Common myeloid progenitor, CD34-positive (primary cell): ENCODE measurements at regions of chr1 and their contacts with region 1.

Region 1: DNA sequence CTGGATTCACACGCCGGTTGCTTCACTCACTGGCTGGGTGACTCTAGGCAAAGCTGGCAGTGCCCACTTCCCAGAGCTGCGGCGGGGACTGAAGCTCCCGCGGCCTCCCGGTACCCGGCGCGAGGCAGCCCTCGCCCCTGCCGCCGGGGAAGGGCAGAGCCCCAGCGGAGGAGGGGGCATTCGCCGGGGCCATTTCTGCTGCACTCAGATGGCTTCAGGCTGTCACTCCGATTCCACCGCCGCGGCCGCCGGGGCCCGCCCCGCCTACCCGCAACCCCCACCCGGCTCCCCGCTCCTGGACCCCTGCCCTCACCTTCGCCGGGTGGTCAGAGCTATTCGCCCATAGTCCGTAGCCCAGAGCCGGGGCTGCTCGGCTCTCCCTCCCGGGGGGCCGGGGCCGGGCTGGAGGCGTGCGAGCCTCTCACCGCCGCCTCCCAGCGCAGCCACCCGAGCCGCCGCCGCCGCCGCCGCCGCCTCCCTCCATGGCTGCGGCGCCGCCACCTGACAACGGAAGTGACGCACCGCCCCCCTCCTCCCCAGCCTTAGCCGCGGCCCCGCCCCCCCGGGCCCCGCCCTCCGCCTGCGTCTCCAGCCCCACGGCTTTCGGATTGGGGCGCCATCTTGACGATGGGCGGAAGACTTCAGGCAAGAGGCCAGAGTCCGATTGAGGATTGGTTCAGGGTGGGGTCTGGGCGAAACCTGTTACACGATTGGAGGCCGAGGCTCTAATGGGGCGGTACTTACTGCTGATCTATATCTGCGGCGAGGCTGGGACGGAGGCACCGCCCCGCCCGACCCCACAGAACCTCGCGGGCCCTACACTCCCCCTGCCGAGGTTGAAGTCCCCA is at the start of gene STK40:
- DNase-seq: peak; percentile 100
- H3K4me3 ChIP-seq: peak within 1 kb of the TSS; percentile 79 to 96 (median 89)
- H3K27ac ChIP-seq: peak within 1 kb of the TSS; percentile 95 to 99
- H3K4me1 ChIP-seq: peaks cover 16 to 50% (median 37%) of the 10 kb centered on the region in 4 experiments
- H3K27me3 ChIP-seq: no peaks in the 10 kb centered on the region

Region 2: GRCh38 chr1:36397378-36398230 is 12.0 kb after region 1 on chr1 and contains the start of gene LSM10:
- CTCF ChIA-PET with region 1: interaction called, 19 read pairs
- POLR2A ChIA-PET with region 1: interaction called, 20 read pairs
- DNase-seq: peak; percentile 91 to 95 (median 94)
- H3K4me3 ChIP-seq: peak within 1 kb of the TSS; percentile 84 to 91 (median 88)
- H3K27ac ChIP-seq: peak within 1 kb of the TSS; percentile 46 to 88
- H3K4me1 ChIP-seq: peaks cover 0 to 33% (median 24%) of the 10 kb centered on the region in 4 experiments
- H3K27me3 ChIP-seq: no peaks in the 10 kb centered on the region

Region 3: GRCh38 chr1:36411674-36412520 is 26.3 kb after region 1 on chr1:
- CTCF ChIA-PET with region 1: interaction called, 10 read pairs
- POLR2A ChIA-PET with region 1: no interaction called
- DNase-seq: peak; percentile 47 to 86 (median 78)
- H3K4me3 ChIP-seq: peak overlapping the region in 1 of 7 experiments; percentile 4
- H3K27ac ChIP-seq: no peak overlapping the region
- H3K4me1 ChIP-seq: peaks cover 0 to 6% (median 3%) of the 10 kb centered on the region in 4 experiments
- H3K27me3 ChIP-seq: no peaks in the 10 kb centered on the region

Region 4: DNA sequence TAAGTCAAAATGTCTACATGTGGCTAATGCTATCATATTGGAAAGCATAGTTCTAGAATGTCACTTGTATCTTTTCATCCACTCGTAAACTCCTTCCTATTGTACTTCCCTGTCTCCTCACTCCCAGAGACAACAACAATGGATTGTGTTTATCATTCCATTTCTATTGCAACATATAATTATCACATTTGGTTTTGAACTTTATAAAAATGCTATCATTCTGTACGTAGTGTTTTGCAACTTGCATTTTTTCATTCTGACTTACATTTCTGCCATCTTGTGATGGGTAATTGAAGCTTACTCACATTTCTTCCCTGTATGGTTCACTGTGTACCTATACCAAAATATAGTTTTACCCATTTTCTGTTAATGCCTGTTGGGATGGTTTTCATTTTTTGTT is 111.6 kb after region 1 on chr1:
- CTCF ChIA-PET with region 1: no interaction called
- POLR2A ChIA-PET with region 1: no interaction called
- DNase-seq: no peak
- H3K4me3 ChIP-seq: no peak overlapping the region
- H3K27ac ChIP-seq: no peak overlapping the region
- H3K4me1 ChIP-seq: peaks cover 0 to 12% (median 10%) of the 10 kb centered on the region in 4 experiments
- H3K27me3 ChIP-seq: no peaks in the 10 kb centered on the region

Region 5: GRCh38 chr1:36612881-36613280 is 227.2 kb after region 1 on chr1:
- CTCF ChIA-PET with region 1: no interaction called
- POLR2A ChIA-PET with region 1: no interaction called
- DNase-seq: no peak
- H3K4me3 ChIP-seq: no peak overlapping the region
- H3K27ac ChIP-seq: no peak overlapping the region
- H3K4me1 ChIP-seq: no peaks in the 10 kb centered on the region
- H3K27me3 ChIP-seq: no peaks in the 10 kb centered on the region